HEK293 (cell line): ENCODE measurements at regions of chr6 and their contacts with region 1.

Region 1: GRCh38 chr6:147382945-147383554 is 125.4 kb upstream of the SAMD5 start:
- H3K4me3 ChIP-seq: no peak overlapping the region
- H3K27ac ChIP-seq: no peak overlapping the region
- H3K4me1 ChIP-seq: no peaks in the 10 kb centered on the region
- CTCF ChIP-seq: no peak

Region 2: DNA sequence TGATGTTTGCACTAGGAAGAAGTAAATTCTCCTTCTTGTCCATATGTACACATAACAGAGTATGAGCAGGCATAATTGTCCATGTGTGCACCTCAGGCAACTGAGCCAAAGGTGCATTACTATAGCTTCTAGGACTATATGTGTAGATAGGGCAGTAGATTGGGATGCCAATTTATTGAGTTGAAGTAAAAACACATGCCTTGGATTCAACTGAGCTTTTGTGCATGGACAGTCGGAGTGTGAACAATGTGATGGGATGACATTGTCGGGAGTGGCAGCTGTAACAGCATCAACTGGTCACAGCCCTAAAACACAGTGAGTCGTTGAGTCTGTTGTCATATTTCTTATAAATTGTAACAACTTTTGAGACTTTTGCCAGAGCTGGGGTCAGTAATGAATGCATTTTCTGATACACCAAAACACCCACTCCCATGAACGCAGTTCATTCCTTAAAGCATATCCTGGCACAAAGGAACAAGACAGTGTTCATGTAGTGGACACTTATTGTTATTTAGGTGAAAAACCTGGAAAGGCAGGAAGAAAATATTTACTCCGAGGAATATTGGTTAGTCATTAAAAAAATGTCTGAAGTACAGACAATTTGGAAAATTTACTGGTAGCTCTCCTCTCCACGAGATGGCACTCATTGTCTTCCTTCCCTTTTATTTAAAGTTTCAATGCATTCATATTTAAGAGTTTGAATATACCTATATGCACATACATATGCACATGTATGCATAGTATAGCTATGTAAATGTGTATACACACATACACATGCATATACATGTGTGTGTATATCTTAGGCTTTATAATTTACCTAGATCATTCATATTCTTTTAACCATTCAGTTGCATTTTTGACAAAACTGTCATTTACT is 480.9 kb before region 1 on chr6:
- CTCF ChIA-PET with region 1: interaction called, 12 read pairs
- POLR2A ChIA-PET with region 1: no interaction called
- H3K4me3 ChIP-seq: no peak overlapping the region
- H3K27ac ChIP-seq: no peak overlapping the region
- H3K4me1 ChIP-seq: peaks cover 3% of the 10 kb centered on the region; the same call in 1 of the 2 replicates
- CTCF ChIP-seq: no peak; the same call in 1 of the 2 replicates

Region 3: GRCh38 chr6:147321260-147321659 is 61.8 kb before region 1 on chr6:
- CTCF ChIA-PET with region 1: no interaction called
- POLR2A ChIA-PET with region 1: no interaction called
- H3K4me3 ChIP-seq: no peak overlapping the region
- H3K27ac ChIP-seq: no peak overlapping the region
- H3K4me1 ChIP-seq: no peaks in the 10 kb centered on the region
- CTCF ChIP-seq: no peak

Region 4: DNA sequence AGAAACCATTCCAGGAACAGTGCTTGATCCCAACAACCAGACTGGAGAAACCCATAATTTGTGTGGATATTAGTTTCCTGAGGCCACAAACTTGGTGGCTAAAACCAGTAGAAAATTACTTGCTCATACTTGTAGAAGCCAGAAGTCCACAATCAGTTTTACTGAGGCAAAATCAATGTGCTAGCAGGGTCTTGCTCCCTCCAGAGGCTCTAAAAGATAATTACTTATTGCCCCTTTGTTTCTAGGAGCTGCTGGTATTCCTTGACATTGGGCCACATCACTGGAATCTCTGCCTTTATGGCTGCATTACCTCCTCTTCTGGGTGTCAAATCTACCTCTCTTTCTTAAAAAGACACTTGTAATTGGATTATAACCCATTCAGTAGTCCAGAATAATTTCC is 16.8 kb before region 1 on chr6:
- CTCF ChIA-PET with region 1: interaction called, 10 read pairs
- POLR2A ChIA-PET with region 1: no interaction called
- H3K4me3 ChIP-seq: no peak overlapping the region
- H3K27ac ChIP-seq: no peak overlapping the region
- H3K4me1 ChIP-seq: no peaks in the 10 kb centered on the region
- CTCF ChIP-seq: no peak

Region 5: DNA sequence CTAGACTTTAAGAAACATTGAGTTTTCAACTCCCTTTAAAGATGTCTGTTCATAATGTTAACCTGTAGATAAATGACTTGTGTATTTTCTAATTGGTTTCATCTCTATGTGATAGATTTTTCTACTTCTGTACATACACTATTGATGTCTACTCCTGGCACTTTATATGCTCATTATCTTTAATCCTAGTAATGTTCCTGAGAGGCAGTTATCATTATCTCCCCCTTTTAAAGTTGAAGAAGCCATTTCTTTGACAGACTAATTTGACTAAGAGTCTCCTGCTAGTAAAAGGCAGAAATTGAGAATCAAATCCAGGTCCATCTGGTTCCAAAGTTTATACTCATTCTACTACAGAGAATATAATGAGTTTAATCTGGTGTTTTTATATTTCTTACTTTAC is 11.7 kb before region 1 on chr6:
- CTCF ChIA-PET with region 1: interaction called, 10 read pairs
- POLR2A ChIA-PET with region 1: no interaction called
- H3K4me3 ChIP-seq: no peak overlapping the region
- H3K27ac ChIP-seq: no peak overlapping the region
- H3K4me1 ChIP-seq: no peaks in the 10 kb centered on the region
- CTCF ChIP-seq: no peak